ENCODE measurements at regions of chr2 and their contacts with region 1.

Region 1: GRCh38 chr2:208072250-208072892 is 47.0 kb upstream of the PLEKHM3 start:
- DNase-seq: peak in 1 of 2 donors; percentile 67
- H3K4me3 ChIP-seq: no peak overlapping the region
- CTCF ChIP-seq: no peak
- POLR2A ChIP-seq: no peak

Region 2: GRCh38 chr2:207746131-207746530 is 326.2 kb before region 1 on chr2:
- intact Hi-C with region 1: loop called (anchors 10 kb)
- DNase-seq: no peak
- H3K4me3 ChIP-seq: no peak overlapping the region
- CTCF ChIP-seq: peak in 1 of 3 donors; percentile 60
- POLR2A ChIP-seq: no peak

Region 3: DNA sequence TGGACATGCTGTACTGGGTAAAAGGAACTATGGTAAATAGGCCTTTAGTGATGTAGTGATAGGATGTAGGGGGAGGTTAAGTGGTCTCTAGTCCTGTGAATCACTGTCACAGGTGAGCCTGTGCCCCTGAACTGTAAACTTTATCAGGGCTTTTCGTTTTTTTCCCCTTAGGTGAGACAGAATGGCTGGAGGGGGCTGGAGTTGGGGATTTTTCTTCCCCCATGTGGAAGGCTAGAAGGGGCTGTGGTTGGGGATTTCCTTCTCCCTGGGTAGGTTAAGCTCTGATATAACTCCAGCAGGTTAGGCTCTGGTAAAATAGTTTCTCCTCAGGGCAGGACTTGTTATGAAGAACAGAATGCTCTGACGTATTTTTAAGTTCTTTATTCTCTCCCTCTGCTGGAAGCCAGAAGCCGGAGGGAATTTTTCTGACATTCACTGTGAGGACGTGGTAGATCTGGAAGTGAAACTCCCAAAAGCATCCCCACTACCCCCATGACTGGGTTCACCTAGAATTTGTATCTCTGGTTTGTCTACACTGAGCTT is 222.2 kb after region 1 on chr2:
- intact Hi-C with region 1: no loop called
- DNase-seq: no peak
- H3K4me3 ChIP-seq: no peak overlapping the region
- CTCF ChIP-seq: no peak
- POLR2A ChIP-seq: no peak

Region 4: GRCh38 chr2:208847651-208848050 is 775.3 kb after region 1 on chr2:
- intact Hi-C with region 1: loop called (anchors 5 kb)
- DNase-seq: no peak
- H3K4me3 ChIP-seq: no peak overlapping the region
- CTCF ChIP-seq: no peak
- POLR2A ChIP-seq: no peak